Activated CD8-positive, alpha-beta memory T cell treated with anti-CD3 and anti-CD28 coated beads, Interleukin-2, amount 10 ng/mL, durations not matched to agents 7 days and 5 days (primary cell): ENCODE measurements at regions of chr2 and their contacts with region 1.

Region 1: GRCh38 chr2:216666461-216667233 is 28.7 kb downstream of the IGFBP5 start:
- DNase-seq: peak; percentile 74
- ATAC-seq: peak; percentile 88
- H3K4me3 Mint-ChIP-seq: no peak overlapping the region
- H3K27ac Mint-ChIP-seq: no peak overlapping the region
- H3K4me1 Mint-ChIP-seq: no peaks in the 10 kb centered on the region
- H3K27me3 Mint-ChIP-seq: peaks cover 2% of the 10 kb centered on the region

Region 2: GRCh38 chr2:216519154-216519762 is 147.4 kb before region 1 on chr2:
- CTCF ChIA-PET with region 1: interaction called, 181 read pairs
- DNase-seq: peak; percentile 70
- ATAC-seq: peak; percentile 81
- H3K4me3 Mint-ChIP-seq: no peak overlapping the region
- H3K27ac Mint-ChIP-seq: no peak overlapping the region
- H3K4me1 Mint-ChIP-seq: peaks cover 3% of the 10 kb centered on the region
- H3K27me3 Mint-ChIP-seq: no peaks in the 10 kb centered on the region

Region 3: DNA sequence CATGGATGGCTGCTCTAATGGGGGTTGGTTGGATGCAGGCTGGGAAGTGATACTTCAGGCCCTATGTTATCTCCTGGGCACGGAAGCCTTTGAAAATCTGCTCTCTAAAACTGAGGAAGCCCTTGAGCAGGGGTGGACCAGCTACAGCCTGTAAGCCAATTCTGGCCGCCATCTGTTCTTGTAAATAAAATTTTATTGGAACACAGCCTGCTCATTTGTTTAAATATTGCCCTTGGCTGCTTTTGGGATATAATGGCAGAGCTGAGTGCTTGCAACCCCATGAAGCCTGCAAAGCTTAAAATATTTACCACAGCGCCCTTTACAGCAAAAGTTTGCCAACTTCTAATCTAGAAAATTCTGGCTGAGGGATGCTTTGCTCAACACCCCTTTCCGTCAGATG is 45.4 kb before region 1 on chr2:
- CTCF ChIA-PET with region 1: no interaction called
- DNase-seq: no peak
- ATAC-seq: no peak
- H3K4me3 Mint-ChIP-seq: no peak overlapping the region
- H3K27ac Mint-ChIP-seq: no peak overlapping the region
- H3K4me1 Mint-ChIP-seq: peaks cover 5% of the 10 kb centered on the region
- H3K27me3 Mint-ChIP-seq: peaks cover 17% of the 10 kb centered on the region

Region 4: GRCh38 chr2:217289877-217290279 is 623.2 kb after region 1 on chr2:
- CTCF ChIA-PET with region 1: no interaction called
- DNase-seq: no peak
- ATAC-seq: no peak
- H3K4me3 Mint-ChIP-seq: no peak overlapping the region
- H3K27ac Mint-ChIP-seq: no peak overlapping the region
- H3K4me1 Mint-ChIP-seq: no peaks in the 10 kb centered on the region
- H3K27me3 Mint-ChIP-seq: no peaks in the 10 kb centered on the region